ENCODE measurements at regions of chr1 and their contacts with region 1.

Region 1: DNA sequence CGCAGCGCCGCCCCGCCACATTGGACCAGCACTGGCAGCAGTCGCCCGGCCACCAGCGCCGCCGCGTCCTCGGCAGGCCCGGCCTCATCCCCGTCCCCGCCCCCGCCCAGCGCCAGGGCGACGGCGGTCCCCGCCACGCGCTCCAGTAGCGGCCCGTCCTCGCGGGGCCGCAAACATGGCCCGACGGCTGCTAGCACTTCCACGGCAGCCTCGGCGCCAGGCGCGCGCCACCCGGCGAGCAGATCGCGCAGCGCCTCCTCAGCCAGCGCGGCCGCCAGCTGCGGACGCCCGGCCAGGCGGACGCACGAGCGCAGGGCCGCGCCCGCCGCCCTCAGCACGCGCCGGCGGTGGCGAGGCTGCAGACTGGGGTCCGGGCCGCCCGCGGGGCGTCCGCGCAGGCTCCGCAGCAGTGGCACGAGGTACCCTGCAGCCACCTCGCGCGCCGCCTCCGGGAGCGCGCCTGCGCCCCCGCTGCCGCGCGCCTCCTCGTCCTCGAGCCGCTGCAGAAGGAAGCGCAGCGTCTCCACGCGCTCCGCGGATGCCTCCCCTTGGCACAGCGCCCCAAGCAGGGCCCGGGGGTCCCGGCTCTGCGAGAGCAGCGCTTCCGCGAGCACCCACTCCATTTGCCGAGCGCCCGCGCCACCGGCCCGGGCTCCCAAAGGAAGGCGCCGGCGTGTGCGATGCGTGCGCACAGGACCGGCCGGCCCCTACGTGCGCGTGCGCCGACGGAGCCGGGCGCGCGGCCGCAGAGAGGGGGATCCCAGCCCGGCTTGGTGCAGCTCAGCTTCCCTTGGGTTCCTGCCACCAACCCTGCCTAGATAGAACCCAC is at the start of gene TARBP1:
- DNase-seq: peak; percentile 87
- CTCF ChIP-seq: peak; percentile 51

Region 2: GRCh38 chr1:234288946-234289345 is 189.7 kb before region 1 on chr1:
- in situ Hi-C with region 1: no loop called
- DNase-seq: no peak
- CTCF ChIP-seq: no peak

Region 3: DNA sequence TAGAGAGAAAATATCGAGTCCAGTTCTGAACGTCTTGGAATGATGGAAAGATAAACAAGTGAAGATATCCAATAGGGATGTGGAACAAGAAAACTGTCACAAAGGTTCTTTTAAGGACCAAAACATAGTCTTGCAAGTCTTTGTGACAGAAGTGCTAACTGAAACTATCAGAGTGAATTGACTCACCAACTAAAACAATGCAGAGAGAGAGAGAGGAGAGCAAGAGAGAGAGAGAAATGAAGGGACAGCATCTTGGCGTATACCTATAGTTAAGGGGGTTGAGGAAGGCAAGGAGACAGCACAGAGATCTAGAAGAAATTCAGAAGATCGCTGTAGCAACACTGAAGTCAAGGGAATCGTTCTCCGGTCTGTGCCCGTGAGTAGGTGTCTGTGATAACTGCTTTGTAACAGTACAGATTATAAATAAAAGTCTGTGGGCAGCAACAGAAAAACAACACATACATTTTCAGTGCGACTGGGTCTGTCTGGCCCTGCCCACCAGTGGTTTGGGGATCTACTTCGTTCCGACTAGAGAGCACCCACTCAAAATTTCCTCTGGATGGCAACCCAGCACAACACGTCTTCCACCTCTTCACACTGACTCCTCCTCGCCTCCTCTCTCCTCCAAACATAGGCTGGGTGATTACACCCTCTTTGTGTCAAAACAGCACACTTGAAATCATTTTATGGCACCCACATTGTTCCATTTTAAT is 110.2 kb before region 1 on chr1:
- in situ Hi-C with region 1: no loop called
- DNase-seq: no peak
- CTCF ChIP-seq: no peak

Region 4: DNA sequence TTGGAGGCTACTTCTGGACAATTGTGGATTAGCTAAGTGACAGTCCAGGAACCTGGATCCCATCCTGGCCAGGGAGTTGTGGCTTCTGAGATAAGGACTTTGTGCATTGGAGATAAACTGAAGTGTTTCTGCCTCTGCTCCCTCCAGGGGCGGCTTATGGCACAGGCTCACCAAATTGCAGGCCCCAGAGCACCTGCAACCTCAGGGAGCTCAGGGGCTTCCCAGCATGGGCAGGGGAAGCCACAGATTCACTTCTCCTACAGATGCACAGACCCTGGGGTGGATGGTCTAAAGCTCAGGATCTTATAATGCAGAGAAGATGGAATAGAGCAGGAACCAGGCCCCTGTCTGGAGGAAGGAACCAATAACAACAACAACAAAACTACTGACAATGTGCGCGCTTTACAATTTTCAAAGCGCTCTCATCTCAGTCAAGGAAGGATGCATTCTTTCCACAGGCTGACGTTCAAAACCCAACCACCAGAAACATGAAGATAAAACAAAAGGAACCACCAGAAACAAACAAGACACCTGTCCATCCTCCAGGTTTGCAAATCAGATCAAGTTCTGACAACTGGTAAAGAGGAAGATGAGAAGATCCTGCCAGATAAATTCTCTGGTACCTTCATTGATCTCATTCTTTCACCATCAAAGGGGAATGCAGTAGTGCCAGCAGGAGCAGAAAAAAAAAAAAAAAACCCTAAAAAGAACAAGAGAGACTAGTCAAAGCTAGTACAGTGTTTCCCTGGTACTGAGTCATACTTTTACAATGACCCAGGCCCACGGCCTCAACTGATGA is 252.3 kb after region 1 on chr1:
- in situ Hi-C with region 1: loop called (anchors 25 kb)
- DNase-seq: peak; percentile 82
- CTCF ChIP-seq: peak; percentile 6